Activated B cell treated with CpG ODN at 0.5 μM for 24 hours (primary cell): ENCODE measurements at regions of chr17 and their contacts with region 1.

Region 1: GRCh38 chr17:27473748-27474609 is 17.7 kb downstream of the KSR1 start:
- DNase-seq: no peak
- ATAC-seq: no peak
- H3K4me3 Mint-ChIP-seq: peak overlapping the region; percentile 71
- H3K27ac Mint-ChIP-seq: peak overlapping the region; percentile 99
- H3K4me1 Mint-ChIP-seq: peaks cover 84% of the 10 kb centered on the region
- H3K27me3 Mint-ChIP-seq: no peaks in the 10 kb centered on the region
- CTCF ChIP-seq: no peak

Region 2: GRCh38 chr17:27354051-27354818 is 119.7 kb before region 1 on chr17:
- CTCF ChIA-PET with region 1: no interaction called
- POLR2A ChIA-PET with region 1: no interaction called
- intact Hi-C with region 1: no loop called
- DNase-seq: no peak
- ATAC-seq: no peak
- H3K4me3 Mint-ChIP-seq: peak overlapping the region; percentile 89
- H3K27ac Mint-ChIP-seq: peak overlapping the region; percentile 50
- H3K4me1 Mint-ChIP-seq: peaks cover 20% of the 10 kb centered on the region
- H3K27me3 Mint-ChIP-seq: no peaks in the 10 kb centered on the region
- CTCF ChIP-seq: no peak

Region 3: GRCh38 chr17:27494192-27495091 is 20.5 kb after region 1 on chr17:
- CTCF ChIA-PET with region 1: no interaction called
- POLR2A ChIA-PET with region 1: interaction called, 6 read pairs
- intact Hi-C with region 1: loop called (anchors 2 kb)
- DNase-seq: no peak
- ATAC-seq: no peak
- H3K4me3 Mint-ChIP-seq: no peak overlapping the region
- H3K27ac Mint-ChIP-seq: no peak overlapping the region
- H3K4me1 Mint-ChIP-seq: peaks cover 35% of the 10 kb centered on the region
- H3K27me3 Mint-ChIP-seq: no peaks in the 10 kb centered on the region
- CTCF ChIP-seq: no peak

Region 4: GRCh38 chr17:27506348-27507231 is 32.6 kb after region 1 on chr17:
- CTCF ChIA-PET with region 1: no interaction called
- POLR2A ChIA-PET with region 1: interaction called, 16 read pairs
- intact Hi-C with region 1: loop called (anchors 1 kb)
- DNase-seq: peak; percentile 49
- ATAC-seq: peak; percentile 88
- H3K4me3 Mint-ChIP-seq: peak overlapping the region; percentile 62
- H3K27ac Mint-ChIP-seq: peak overlapping the region; percentile 83
- H3K4me1 Mint-ChIP-seq: peaks cover 46% of the 10 kb centered on the region
- H3K27me3 Mint-ChIP-seq: no peaks in the 10 kb centered on the region
- CTCF ChIP-seq: no peak

Region 5: GRCh38 chr17:27630607-27631410 is 156.8 kb after region 1 on chr17 and contains the start of gene LGALS9:
- CTCF ChIA-PET with region 1: no interaction called
- POLR2A ChIA-PET with region 1: no interaction called
- intact Hi-C with region 1: loop called (anchors 5 kb)
- DNase-seq: no peak
- ATAC-seq: peak; percentile 41
- H3K4me3 Mint-ChIP-seq: peak within 1 kb of the TSS; percentile 96
- H3K27ac Mint-ChIP-seq: peak within 1 kb of the TSS; percentile 94
- H3K4me1 Mint-ChIP-seq: peaks cover 50% of the 10 kb centered on the region
- H3K27me3 Mint-ChIP-seq: no peaks in the 10 kb centered on the region
- CTCF ChIP-seq: no peak
- total RNA-seq, gene LGALS9: 76.8 and 79.9 TPM in 2 replicates